Activated CD4-positive, alpha-beta memory T cell treated with anti-CD3 and anti-CD28 coated beads, Interleukin-2, amount 10 ng/mL, durations not matched to agents 7 days and 5 days (primary cell): ENCODE measurements at regions of chr1 and their contacts with region 1.

Region 1: DNA sequence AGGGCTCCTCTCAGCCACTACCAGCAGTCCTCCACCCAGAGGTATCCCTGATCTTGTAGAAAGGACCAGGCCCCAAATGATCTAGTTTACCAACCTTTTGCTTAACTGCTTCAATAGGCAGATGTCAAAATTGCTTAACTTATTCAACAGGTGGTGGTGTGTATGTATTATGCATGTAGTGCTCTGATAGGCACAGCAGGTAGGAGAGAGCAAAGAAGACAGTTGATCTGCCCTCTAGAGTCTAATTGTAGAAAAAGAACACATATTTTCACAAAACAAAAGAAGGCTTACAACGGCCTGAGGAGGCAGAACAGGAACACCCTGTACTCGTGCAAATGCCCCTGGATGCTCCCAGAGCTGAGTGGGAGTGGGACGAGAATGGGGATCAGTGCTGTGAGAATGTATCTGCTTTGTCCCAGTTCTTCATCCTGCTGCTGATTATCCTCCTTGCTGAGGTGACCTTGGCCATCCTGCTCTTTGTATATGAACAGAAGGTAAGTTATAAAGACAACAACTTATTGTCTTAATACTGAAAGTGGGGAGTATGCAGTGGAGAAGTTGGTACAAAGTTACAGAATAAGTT is 21.1 kb downstream of the CD53 start:
- DNase-seq: no peak
- H3K4me3 Mint-ChIP-seq: no peak overlapping the region
- H3K27ac Mint-ChIP-seq: no peak overlapping the region
- H3K4me1 Mint-ChIP-seq: peaks cover 96% of the 10 kb centered on the region
- H3K27me3 Mint-ChIP-seq: no peaks in the 10 kb centered on the region

Region 2: DNA sequence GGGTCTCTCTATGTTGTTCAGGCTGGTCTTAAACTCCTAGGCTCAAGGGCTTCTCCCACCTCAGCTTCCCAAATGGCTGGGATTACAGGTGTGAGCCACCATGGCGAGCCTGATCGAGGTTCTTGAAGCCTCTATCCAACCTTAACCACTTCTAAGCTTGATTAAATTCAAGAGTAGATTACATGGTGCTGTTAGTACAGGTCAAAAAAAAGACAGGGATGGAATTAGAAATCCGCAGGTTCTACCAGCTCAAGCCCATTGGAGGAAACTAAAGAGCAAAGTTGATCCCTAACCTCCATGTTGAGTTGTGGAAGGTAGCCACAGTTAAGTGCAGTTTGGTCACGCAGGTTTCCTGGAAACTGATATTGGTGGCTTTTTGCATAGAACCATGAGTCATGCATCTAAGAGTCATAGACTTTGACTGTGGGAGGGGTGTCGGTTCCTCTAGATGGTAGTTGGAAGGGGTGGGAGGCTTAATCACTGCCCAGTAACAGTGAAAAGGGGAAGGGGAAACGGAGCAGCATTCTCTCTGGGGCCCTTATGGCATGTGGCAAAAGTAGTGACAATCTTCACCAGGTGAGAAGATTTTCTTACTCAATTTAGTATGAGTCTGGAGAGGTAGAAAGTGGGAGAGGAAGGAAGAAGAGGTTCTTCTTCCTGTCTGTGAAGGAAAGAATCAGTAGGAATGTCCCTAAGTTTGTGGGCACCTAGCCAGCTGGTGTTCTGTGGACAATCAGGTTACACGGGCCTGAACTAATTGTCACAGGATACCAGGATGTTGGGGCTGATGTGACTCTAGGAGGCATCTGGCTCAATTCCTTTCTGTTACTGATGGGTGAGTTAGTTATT is 14.0 kb before region 1 on chr1:
- CTCF ChIA-PET with region 1: no interaction called
- POLR2A ChIA-PET with region 1: interaction called, 136 read pairs
- DNase-seq: peak; percentile 82
- H3K4me3 Mint-ChIP-seq: peak overlapping the region; percentile 97
- H3K27ac Mint-ChIP-seq: peak overlapping the region; percentile 100
- H3K4me1 Mint-ChIP-seq: peaks cover 63% of the 10 kb centered on the region
- H3K27me3 Mint-ChIP-seq: no peaks in the 10 kb centered on the region